ENCODE measurements at regions of chr9 and their contacts with region 1.

Region 1: GRCh38 chr9:128688512-128689292 is at the start of gene SET:
- DNase-seq: peak; percentile 97
- ATAC-seq: peak; percentile 81
- H3K4me3 Mint-ChIP-seq: peak within 1 kb of the TSS; percentile 98
- H3K27ac Mint-ChIP-seq: peak within 1 kb of the TSS; percentile 87
- H3K4me1 Mint-ChIP-seq: peaks cover 68% of the 10 kb centered on the region
- H3K27me3 Mint-ChIP-seq: no peaks in the 10 kb centered on the region
- CTCF ChIP-seq: no peak
- total RNA-seq, gene SET: 762 and 801 TPM in 2 replicates

Region 2: DNA sequence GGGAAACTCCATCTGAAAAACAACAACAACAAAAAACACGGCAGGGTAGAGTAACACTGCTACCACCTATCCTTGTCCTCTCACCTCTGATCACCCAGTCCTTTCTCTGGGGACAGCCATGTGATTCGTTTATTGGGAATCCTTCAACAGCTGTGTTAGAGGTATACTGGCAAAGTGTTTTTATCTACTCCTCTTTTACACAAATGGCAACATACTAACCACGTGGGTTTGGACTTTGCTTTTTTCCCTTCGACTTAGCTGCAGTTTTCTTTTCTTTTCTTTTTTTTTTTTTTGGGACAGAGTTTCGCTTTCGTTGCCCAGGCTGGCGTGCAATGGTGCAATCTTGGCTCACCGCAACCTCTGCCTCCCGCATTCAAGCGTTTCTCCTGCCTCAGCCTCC is 10.9 kb before region 1 on chr9:
- CTCF ChIA-PET with region 1: no interaction called
- POLR2A ChIA-PET with region 1: interaction called, 61 read pairs
- intact Hi-C with region 1: no loop called
- DNase-seq: no peak
- ATAC-seq: no peak
- H3K4me3 Mint-ChIP-seq: no peak overlapping the region
- H3K27ac Mint-ChIP-seq: peak overlapping the region; percentile 42
- H3K4me1 Mint-ChIP-seq: peaks cover 15% of the 10 kb centered on the region
- H3K27me3 Mint-ChIP-seq: no peaks in the 10 kb centered on the region
- CTCF ChIP-seq: no peak

Region 3: GRCh38 chr9:128771745-128772519 is 83.2 kb after region 1 on chr9 and contains the start of gene ZER1:
- CTCF ChIA-PET with region 1: no interaction called
- POLR2A ChIA-PET with region 1: interaction called, 4 read pairs
- intact Hi-C with region 1: loop called (anchors 1 kb)
- DNase-seq: peak; percentile 96
- ATAC-seq: peak; percentile 93
- H3K4me3 Mint-ChIP-seq: peak within 1 kb of the TSS; percentile 92
- H3K27ac Mint-ChIP-seq: peak within 1 kb of the TSS; percentile 89
- H3K4me1 Mint-ChIP-seq: peaks cover 24% of the 10 kb centered on the region
- H3K27me3 Mint-ChIP-seq: no peaks in the 10 kb centered on the region
- CTCF ChIP-seq: no peak
- total RNA-seq, gene ZER1: 24.0 and 26.0 TPM in 2 replicates